ENCODE measurements at regions of chr18 and their contacts with region 1.

Region 1: GRCh38 chr18:26090130-26091046 is at the start of gene SS18:
- DNase-seq: peak; percentile 89
- H3K4me3 Mint-ChIP-seq: peak within 1 kb of the TSS; percentile 95
- H3K27ac Mint-ChIP-seq: peak within 1 kb of the TSS; percentile 95
- H3K4me1 Mint-ChIP-seq: peaks cover 33% of the 10 kb centered on the region
- H3K27me3 Mint-ChIP-seq: no peaks in the 10 kb centered on the region
- total RNA-seq, gene SS18: 64.4 and 72.4 TPM in 2 replicates

Region 2: GRCh38 chr18:26133652-26134051 is 43.3 kb after region 1 on chr18 and contains the start of gene PSMA8:
- intact Hi-C with region 1: loop called (anchors 2 kb)
- DNase-seq: peak; percentile 34
- H3K4me3 Mint-ChIP-seq: peak within 1 kb of the TSS; percentile 79
- H3K27ac Mint-ChIP-seq: peak within 1 kb of the TSS; percentile 59
- H3K4me1 Mint-ChIP-seq: no peaks in the 10 kb centered on the region
- H3K27me3 Mint-ChIP-seq: peaks cover 3% of the 10 kb centered on the region
- total RNA-seq, gene PSMA8: 0.44 and 0.49 TPM in 2 replicates

Region 3: GRCh38 chr18:26190506-26190905 is 100.1 kb after region 1 on chr18:
- intact Hi-C with region 1: loop called (anchors 1 kb)
- DNase-seq: peak; percentile 22
- H3K4me3 Mint-ChIP-seq: peak overlapping the region; percentile 60
- H3K27ac Mint-ChIP-seq: peak overlapping the region; percentile 67
- H3K4me1 Mint-ChIP-seq: peaks cover 7% of the 10 kb centered on the region
- H3K27me3 Mint-ChIP-seq: no peaks in the 10 kb centered on the region

Region 4: GRCh38 chr18:26226229-26227005 is 136.0 kb after region 1 on chr18 and contains the start of gene TAF4B:
- intact Hi-C with region 1: loop called (anchors 1 kb)
- DNase-seq: peak; percentile 93
- H3K4me3 Mint-ChIP-seq: peak within 1 kb of the TSS; percentile 94
- H3K27ac Mint-ChIP-seq: peak within 1 kb of the TSS; percentile 93
- H3K4me1 Mint-ChIP-seq: peaks cover 42% of the 10 kb centered on the region
- H3K27me3 Mint-ChIP-seq: peaks cover 3% of the 10 kb centered on the region
- total RNA-seq, gene TAF4B: 16.1 and 17.0 TPM in 2 replicates

Measured in activated T-helper 1 cell treated with anti-CD3 and anti-CD28 coated beads, Interleukin-12 subunit alpha, Interleukin-12 subunit beta, Interleukin-2, Interleukin-4 antibody, amounts not matched to agents 30 ng/mL and 10 ng/mL and 1 ng/mL, durations not matched to agents 14 hours and 24 hours and 36 hours (primary cell).